Heart right ventricle (tissue), 16 donors: ENCODE measurements at regions of chr20 and their contacts with region 1.

Region 1: DNA sequence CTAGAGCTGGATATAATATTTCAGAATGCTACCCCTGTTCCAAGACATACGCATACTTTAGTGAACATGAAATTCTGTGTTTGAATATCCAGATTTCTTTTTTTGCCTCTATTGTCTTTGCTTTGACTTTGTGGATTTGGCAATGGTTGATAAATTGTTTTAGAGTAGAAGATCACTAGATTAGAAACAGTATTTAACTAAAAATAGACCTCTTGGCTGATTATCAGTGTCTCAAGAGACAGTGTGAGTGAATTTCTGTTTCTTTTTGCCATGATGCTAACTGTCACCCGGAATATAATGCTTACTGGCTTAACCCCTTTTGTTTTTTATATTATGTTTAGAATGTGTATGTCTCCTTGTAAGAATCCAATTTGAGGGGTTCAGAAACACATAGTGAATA is 102.5 kb downstream of the PLCB1 start:
- DNase-seq: no peak
- ATAC-seq: peak in 4 of 8 donors; percentile 11 to 83 (median 58)
- H3K4me3 ChIP-seq: no peak overlapping the region
- H3K27ac ChIP-seq: peak overlapping the region in 4 of 10 donors; percentile 11 to 54 (median 40)
- H3K4me1 ChIP-seq: peaks cover 0 to 47% (median 12%) of the 10 kb centered on the region in 9 donors
- H3K27me3 ChIP-seq: no peaks in the 10 kb centered on the region
- CTCF ChIP-seq: no peak

Region 2: DNA sequence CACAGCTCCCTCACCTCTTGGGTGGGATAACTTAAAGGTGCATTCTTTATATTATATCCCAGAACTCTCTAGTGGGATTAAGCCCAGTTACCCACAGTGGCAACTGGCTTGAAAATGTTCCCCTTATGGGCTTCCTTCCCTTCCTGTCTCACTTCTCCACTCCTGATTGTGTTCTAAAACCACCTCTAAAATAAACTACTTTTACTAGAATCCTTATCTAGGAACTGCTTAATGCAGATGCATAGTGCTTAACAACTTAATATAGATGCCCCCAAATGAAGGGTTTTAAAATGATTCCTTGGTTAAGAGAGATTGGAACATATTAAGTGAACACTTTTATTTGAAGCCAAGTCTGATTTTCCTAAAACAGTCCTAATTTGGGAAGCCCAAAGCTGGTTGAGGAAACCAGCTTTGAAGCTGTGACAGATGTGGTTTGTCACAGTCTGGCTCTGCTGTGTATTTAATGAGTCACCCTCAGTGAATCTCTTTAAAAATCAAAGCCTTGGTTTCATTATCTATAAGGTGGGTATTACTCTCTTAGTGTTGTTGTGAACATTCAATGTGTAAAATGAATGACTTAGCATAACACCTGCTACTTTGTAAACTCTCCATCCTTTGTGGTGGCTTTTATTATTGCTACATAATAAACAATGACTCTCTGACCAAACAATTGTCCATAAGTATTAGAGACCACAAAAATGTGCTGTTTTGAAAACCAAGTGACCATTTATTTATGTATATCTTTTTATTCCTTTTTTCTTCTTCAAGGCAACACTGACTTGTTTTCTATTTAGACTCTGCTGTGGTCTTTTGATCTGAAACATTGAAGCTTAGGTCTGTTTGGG is 78.1 kb before region 1 on chr20:
- intact Hi-C with region 1: loop called in 1 of 10 experiments (anchors 10 kb)
- DNase-seq: no peak
- ATAC-seq: peak in 5 of 8 donors; percentile 31 to 57 (median 44)
- H3K4me3 ChIP-seq: no peak overlapping the region
- H3K27ac ChIP-seq: peak overlapping the region in 7 of 10 donors; percentile 5 to 42 (median 22)
- H3K4me1 ChIP-seq: peaks cover 0 to 66% (median 54%) of the 10 kb centered on the region in 9 donors
- H3K27me3 ChIP-seq: no peaks in the 10 kb centered on the region
- CTCF ChIP-seq: no peak

Region 3: DNA sequence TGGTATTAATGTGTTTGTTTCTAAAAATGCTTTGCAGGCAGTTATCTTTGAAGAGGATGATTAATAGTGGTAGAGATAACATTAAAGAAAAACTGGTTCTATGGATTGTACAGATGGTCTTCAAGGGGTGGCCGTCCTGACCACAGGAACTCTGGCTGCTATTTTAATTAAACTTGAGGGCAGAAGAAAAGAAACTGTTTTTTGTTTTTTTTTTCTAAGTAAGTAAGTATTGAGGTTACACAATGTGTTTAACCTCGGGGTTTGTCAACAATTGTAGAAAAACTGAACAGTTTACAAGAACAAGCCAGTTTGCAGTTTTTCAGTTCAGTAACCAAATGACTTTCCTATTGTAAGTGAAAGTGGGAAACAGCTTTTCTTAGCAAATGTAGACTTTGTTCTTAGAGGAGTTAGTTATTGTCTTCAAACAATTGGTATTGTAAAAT is 25.6 kb before region 1 on chr20:
- intact Hi-C with region 1: no loop called
- DNase-seq: no peak
- ATAC-seq: peak in 3 of 8 donors; percentile 12 to 53 (median 20)
- H3K4me3 ChIP-seq: no peak overlapping the region
- H3K27ac ChIP-seq: peak overlapping the region in 6 of 10 donors; percentile 8 to 36 (median 20)
- H3K4me1 ChIP-seq: peaks cover 0 to 43% (median 13%) of the 10 kb centered on the region in 9 donors
- H3K27me3 ChIP-seq: no peaks in the 10 kb centered on the region
- CTCF ChIP-seq: no peak

Region 4: DNA sequence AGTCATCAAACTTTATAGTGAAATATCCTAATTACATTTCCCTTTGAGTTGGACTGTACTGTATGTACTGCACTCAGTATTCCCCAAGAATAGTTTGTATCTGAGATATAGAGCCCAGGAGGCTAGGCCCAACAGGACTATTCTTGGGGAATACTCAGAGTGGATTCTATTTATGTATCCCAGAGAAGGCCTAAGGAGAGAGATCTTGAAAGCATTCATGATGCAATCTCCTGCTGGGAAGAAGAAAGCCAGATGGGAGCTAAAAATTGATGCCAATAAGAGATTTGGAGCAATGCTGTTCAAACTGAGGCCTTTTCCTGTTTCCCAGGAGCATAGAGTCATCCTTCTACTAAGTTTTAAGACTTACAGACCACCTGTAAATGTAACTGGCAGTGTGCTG is 382.2 kb after region 1 on chr20:
- intact Hi-C with region 1: no loop called
- DNase-seq: no peak
- ATAC-seq: peak in 7 of 8 donors; percentile 59 to 84 (median 79)
- H3K4me3 ChIP-seq: no peak overlapping the region
- H3K27ac ChIP-seq: peak overlapping the region in 6 of 10 donors; percentile 17 to 44 (median 24)
- H3K4me1 ChIP-seq: peaks cover 0 to 13% (median 0%) of the 10 kb centered on the region in 9 donors
- H3K27me3 ChIP-seq: no peaks in the 10 kb centered on the region
- CTCF ChIP-seq: no peak